MCF 10A (cell line): ENCODE measurements at regions of chr20 and their contacts with region 1.

Region 1: DNA sequence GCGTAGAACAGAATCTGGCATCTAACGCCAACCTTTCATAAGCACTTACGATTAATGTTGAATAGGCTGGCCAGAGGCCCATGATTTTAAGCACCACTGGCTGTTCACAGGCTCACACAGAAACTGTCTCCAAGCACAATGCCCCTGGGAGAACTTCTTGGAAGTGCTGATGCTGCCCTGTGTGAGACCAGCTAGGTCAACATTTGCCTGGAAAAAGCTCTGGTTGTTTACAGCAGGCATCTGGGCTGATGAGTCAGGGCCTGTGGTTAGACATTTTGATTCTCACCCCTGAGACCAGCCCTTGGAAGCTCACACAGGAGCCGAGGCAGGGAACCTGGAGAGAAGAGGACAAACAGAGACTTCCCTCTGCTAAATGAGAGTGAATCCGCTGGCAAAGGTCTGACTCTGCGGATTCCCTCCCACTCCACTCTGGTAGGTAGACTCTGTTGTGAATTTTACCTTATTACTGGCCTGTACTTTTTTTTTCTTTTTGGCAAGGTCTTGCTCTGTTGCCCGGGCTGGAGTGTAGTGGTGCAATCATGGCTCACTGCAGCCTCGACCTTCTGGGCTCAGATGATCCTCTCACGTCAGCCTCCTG is 6.8 kb upstream of the SULF2 start:
- DNase-seq: peak; percentile 99
- H3K4me3 Mint-ChIP-seq: peak overlapping the region; percentile 77
- H3K27ac Mint-ChIP-seq: peak overlapping the region; percentile 94
- H3K4me1 Mint-ChIP-seq: peaks cover 50% of the 10 kb centered on the region
- H3K27me3 Mint-ChIP-seq: no peaks in the 10 kb centered on the region
- CTCF ChIP-seq: no peak

Region 2: DNA sequence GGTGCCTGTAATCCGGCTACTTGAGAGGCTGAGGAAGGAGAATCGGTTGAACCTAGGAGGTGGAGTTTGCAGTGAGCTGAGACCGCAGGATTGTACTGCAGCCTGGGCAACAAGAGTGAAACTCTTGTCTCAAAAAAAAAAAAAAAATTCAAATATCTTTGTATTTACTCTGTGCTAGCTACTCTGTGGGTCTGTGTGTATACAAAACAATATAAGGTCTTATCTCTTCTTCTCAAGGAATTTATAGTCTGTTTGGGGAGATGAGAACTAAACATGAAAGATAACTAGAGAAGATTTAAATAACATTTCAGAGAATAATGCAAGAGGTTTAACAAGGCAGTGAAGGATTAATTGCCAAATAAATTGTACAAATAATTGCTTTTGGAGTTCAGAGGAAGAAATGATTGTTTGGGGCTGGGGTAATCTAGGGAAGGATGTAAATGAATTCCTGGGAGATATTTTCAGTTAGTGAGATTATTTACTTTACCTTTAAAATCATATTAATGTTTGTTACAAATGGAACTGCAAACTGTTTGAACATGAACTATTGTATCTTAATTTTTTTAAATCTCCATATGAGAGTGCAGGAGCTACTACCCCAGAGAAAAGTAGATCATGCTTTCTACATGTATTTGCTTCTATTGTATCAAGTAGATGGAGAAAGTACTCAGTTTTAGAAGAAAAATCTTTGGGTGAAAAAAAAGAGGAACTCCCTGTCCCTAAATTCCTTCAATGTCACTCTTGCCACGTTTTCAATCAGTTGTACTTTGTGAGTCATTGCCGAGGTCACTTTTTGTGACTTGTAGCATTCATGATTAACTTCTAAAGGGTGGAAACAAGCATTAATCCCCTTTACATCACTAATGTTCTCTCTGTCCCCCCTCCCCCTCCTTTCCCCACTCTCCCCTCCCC is 251.4 kb before region 1 on chr20:
- CTCF ChIA-PET with region 1: no interaction called
- POLR2A ChIA-PET with region 1: no interaction called
- intact Hi-C with region 1: no loop called
- DNase-seq: no peak
- H3K4me3 Mint-ChIP-seq: no peak overlapping the region
- H3K27ac Mint-ChIP-seq: no peak overlapping the region
- H3K4me1 Mint-ChIP-seq: peaks cover 29% of the 10 kb centered on the region
- H3K27me3 Mint-ChIP-seq: no peaks in the 10 kb centered on the region
- CTCF ChIP-seq: no peak

Region 3: DNA sequence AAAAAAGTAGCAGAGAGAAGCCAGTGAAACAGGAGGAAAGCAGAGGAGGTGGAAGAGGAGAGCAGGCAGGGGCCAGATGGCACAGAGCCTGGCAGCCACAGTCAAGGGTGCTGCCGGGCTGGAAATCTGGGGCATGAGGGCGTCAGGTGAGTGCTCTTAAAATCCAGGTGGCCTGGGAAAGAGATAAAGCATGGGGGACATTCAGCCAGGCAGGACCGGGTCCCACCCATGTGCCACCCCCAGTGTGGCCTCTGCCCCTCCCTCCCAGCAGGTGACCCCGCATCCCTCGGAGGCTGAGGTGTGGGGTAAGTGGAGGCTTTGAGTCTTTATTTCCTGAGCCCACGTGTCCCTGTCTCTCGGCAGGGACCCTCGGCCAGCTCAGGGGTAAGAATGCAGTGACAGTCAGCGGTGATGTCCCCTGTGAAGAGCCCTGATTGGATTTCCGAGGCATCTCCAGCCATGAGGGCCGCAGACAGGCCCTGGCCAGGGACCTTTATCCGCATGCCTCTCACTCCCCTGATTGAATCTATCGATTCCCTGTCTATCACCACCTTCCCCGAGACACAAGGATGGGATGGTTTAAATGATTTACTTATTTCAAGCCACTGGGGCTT is 27.0 kb after region 1 on chr20:
- CTCF ChIA-PET with region 1: interaction called, 7 read pairs
- POLR2A ChIA-PET with region 1: interaction called, 16 read pairs
- intact Hi-C with region 1: no loop called
- DNase-seq: no peak
- H3K4me3 Mint-ChIP-seq: no peak overlapping the region
- H3K27ac Mint-ChIP-seq: no peak overlapping the region
- H3K4me1 Mint-ChIP-seq: peaks cover 57% of the 10 kb centered on the region
- H3K27me3 Mint-ChIP-seq: no peaks in the 10 kb centered on the region
- CTCF ChIP-seq: no peak

Region 4: DNA sequence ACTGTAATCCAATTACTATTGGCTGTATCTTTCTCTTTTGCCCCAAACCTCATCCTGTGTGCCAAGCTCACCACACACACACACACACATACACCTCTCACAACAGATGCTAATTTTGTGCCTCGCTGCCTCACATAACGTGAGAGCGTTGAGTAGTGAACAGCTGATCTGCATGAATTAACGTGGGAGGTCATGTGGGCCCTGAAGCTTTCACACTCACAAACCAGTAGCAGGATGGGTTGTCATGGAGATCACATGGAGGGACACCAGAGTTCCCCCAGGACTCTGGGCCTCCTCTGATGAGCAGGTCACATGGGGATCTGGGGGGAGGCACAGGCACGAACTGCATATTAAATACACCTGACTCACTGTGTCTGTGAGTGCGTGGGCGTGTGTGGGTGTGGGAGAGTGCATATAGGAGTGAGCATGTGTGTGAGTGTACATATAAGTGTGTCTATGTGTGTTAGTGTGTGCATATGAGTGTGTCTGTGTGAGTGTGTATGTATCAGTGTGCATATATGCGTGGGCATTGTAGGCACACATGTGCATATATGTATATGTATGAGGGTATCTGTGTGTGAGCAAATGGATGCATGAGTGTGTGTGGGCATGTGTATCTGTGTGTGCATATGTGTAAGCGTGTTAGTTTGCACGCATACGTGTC is 55.9 kb after region 1 on chr20:
- CTCF ChIA-PET with region 1: interaction called, 9 read pairs
- POLR2A ChIA-PET with region 1: interaction called, 5 read pairs
- intact Hi-C with region 1: loop called (anchors 2 kb)
- DNase-seq: no peak
- H3K4me3 Mint-ChIP-seq: no peak overlapping the region
- H3K27ac Mint-ChIP-seq: no peak overlapping the region
- H3K4me1 Mint-ChIP-seq: peaks cover 46% of the 10 kb centered on the region
- H3K27me3 Mint-ChIP-seq: no peaks in the 10 kb centered on the region
- CTCF ChIP-seq: no peak

Region 5: DNA sequence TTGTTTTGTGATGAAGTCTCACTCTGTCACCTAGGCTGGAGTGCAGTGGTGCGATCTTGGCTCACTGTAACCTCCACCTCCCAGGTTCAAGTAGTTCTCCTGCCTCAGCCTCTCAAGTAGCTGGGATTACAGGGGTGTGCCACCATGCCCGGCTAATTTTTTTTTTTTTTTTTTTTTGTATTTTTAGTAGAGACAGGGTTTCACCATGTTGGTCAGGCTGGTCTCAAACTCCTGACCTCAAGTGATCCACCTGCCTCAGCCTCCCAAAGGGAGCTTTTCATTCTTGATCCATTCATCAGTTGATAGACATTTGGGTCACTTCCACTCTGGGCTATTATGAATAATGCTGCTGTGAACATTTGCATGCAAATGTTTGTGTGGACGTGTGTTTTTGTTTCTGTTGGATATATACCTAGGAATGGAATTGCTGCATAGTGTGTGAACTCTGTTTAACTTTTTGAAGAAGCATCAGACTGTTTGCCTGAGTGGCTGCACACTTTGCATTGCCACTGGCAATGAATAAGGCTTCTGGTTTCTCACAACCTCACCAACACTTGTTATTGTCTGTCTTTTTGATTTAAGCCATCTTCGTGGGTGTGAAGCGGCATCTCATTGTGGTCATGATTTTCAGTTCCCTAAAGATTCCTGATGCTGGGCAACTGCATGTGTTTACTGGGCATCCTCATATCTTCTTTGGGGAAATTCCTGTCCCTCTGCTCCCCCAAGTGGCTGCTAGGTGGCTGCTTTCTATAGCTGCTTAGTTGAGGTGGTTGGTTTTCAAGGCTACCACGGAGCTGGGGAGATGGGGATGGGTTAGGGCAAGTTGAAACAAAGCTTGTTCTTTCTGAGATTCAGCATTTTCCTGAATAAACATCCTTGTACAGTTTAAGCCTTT is 396.8 kb after region 1 on chr20:
- CTCF ChIA-PET with region 1: interaction called, 27 read pairs
- POLR2A ChIA-PET with region 1: interaction called, 25 read pairs
- intact Hi-C with region 1: no loop called
- DNase-seq: peak; percentile 68
- H3K4me3 Mint-ChIP-seq: no peak overlapping the region
- H3K27ac Mint-ChIP-seq: no peak overlapping the region
- H3K4me1 Mint-ChIP-seq: peaks cover 23% of the 10 kb centered on the region
- H3K27me3 Mint-ChIP-seq: no peaks in the 10 kb centered on the region
- CTCF ChIP-seq: peak; percentile 37